HEK293 (cell line): ENCODE measurements at regions of chr19 and their contacts with region 1.

Region 1: GRCh38 chr19:19531951-19532805 is 3.5 kb downstream of the YJEFN3 start:
- H3K4me3 ChIP-seq: no peak overlapping the region
- H3K27ac ChIP-seq: no peak overlapping the region
- H3K4me1 ChIP-seq: no peaks in the 10 kb centered on the region
- CTCF ChIP-seq: peak; percentile 91

Region 2: DNA sequence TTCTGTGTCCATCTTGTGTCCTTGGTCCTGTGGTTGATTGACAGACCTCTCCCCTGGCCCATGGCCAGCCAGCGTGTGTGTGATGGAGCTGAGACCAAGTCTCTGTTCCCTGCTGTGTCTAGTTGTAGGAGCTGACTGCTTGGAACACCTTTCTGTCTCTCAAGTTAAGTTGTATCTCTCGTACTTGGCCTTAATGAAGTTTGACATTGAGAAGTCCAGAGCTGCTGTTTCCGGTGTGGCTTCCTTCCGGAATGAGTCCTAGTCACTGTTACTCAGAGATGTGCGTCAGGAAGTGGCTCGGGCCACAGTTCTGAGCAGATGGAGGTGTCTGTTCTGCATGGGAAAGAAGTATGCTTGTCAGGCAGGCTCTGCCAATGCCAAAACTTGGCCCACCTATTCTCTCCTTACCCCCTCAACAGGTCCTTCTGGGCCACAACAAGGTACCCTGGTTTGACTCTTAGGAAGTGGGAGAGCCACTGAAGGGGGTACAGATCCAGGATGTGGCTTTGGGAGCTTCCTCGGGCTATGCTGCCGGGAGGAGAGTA is 72.4 kb before region 1 on chr19:
- CTCF ChIA-PET with region 1: no interaction called
- POLR2A ChIA-PET with region 1: no interaction called
- H3K4me3 ChIP-seq: no peak overlapping the region
- H3K27ac ChIP-seq: no peak overlapping the region
- H3K4me1 ChIP-seq: peaks cover 25% of the 10 kb centered on the region
- CTCF ChIP-seq: no peak

Region 3: DNA sequence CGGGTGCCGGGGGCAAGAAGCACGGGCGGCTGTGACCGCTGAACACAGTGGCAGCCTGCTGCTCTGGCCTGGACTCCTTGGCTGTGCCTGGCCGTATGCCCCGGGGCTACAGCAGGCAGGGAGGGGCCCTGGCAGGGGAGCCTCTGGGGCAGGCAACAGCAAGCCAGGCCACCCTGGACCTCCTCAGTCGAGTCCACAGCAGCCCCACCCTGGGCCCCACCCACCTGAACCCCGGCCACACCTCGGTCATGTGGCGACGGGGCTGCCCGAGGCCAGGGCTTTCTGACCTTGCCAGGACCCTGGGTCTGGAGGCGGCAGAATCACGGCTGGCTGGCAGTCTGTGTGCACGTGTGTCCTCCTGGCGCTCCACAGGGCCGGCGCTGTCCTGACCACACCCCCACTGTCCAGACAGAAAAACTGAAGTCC is 14.6 kb after region 1 on chr19:
- CTCF ChIA-PET with region 1: interaction called, 75 read pairs
- POLR2A ChIA-PET with region 1: interaction called, 5 read pairs
- H3K4me3 ChIP-seq: no peak overlapping the region
- H3K27ac ChIP-seq: no peak overlapping the region
- H3K4me1 ChIP-seq: no peaks in the 10 kb centered on the region
- CTCF ChIP-seq: no peak

Region 4: DNA sequence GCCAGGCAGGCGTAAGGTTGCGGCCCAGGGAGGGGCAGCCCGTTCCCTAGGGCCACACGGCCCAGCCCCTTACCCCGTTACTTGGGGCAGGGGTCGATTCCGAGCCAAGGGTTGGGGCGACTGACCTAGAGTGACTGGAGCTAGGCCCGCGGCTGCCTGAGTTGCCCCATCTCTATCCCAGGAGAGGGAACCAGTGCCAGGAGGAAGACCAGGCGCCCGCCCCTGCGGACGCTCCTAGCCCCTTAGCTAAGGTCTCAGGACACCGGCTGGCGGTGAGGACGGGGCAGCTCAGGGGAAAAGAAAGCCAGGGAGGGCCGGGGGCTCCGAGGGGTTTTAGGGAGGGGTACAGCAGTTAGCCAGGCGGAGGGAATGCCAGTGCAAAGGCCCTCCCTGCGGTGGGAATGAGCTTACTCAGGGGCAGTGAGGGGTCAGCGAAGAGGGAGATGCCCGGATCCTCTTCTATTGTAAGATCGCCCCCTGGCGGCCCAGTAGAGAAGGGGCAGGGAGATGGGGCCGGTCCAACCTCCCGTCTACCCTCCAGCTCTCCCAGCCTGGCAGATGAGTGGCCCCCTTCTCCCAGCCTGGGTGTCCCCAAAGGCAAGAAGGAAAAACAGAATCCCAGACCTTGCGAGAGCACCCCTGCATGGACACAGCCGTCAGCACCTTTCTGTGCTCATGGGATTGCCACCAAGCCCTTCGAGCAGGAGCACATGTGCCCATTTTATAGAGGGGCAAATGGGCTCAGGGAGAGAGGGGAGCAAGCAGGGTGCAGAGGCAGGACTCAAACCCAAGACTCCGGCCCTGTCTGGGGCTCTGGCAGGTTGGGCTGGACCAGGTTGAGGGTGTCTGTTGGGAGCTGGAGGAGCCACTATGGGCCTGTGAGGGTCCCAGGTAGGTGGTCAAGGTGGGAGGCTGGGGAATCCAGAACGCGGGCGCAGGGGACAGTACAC is 22.2 kb after region 1 on chr19:
- CTCF ChIA-PET with region 1: interaction called, 75 read pairs
- POLR2A ChIA-PET with region 1: interaction called, 7 read pairs
- H3K4me3 ChIP-seq: no peak overlapping the region
- H3K27ac ChIP-seq: no peak overlapping the region
- H3K4me1 ChIP-seq: no peaks in the 10 kb centered on the region
- CTCF ChIP-seq: 0 out of 2 replicates have a peak, but pooled peaks have one; percentile 19

Region 5: DNA sequence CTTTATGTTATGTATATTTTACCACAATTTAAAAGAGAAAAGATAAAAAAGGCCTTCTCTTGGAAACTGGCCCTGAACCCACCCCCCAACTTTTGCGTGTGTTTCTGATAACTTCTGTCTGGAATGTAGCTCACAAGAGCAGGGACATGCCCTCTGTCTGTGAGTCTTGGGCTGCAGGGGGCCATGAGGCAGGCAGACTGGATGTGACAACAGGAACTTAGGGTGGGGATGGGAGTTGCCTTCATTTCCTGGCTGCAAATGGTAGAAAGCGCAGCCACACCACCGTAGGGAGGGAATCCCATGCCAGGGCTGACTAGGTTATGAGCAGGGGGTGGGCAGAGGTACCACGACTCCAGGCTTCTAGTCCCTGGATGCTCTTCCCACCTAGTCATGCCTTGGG is 27.8 kb after region 1 on chr19:
- CTCF ChIA-PET with region 1: interaction called, 75 read pairs
- POLR2A ChIA-PET with region 1: no interaction called
- H3K4me3 ChIP-seq: no peak overlapping the region
- H3K27ac ChIP-seq: no peak overlapping the region
- H3K4me1 ChIP-seq: no peaks in the 10 kb centered on the region
- CTCF ChIP-seq: no peak

Region 6: DNA sequence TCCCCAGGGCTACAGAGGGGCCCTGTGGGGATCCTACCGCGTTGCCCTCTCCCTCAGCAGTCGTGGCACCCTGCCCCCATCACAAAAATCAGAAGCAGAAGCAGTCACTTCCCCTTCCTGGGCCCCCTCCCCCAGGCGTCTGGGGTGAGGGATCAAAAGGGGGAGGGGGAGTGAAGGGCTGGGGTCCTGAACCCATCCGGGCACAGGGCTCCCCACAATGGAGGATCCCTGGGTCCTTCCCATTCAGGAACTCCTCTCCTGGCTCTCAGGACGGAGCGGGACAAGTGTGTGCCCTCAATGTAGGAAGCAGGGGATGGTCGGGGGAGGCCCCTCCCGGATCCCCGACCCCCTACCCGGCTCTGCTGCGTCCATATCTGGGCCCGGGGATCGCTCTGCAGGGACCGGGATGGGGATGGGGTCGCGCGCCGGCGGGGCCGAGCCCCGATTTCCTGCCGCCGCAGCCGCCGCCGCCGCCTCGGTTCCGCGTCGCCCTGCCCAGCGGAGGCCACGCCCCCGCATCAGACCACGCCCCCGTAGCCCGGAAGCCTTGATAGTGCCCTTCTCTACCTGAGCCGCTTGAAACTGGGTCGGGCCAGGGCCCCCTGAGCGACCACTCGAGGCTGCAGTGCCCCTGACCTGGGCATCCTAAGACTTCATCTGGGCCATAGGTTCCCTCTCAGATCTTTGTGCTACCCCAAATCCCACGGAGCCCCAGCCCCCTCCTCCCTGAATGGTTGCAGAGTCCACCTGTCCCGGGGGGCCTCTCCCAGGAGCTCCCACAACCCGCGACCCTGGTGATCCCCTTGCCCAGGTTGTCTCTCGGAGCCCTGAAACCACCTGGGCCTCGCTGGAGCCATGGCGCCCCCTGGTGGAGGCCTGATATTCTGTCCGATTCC is 111.2 kb after region 1 on chr19 and contains the start of gene GMIP:
- CTCF ChIA-PET with region 1: interaction called, 47 read pairs
- POLR2A ChIA-PET with region 1: interaction called, 3 read pairs
- H3K4me3 ChIP-seq: peak within 1 kb of the TSS; percentile 81
- H3K27ac ChIP-seq: peak within 1 kb of the TSS; percentile 46; the same call in 1 of the 2 replicates
- H3K4me1 ChIP-seq: no peaks in the 10 kb centered on the region
- CTCF ChIP-seq: peak; percentile 62